Dorsolateral prefrontal cortex (tissue), 120 donors: ENCODE measurements at regions of chr1 and their contacts with region 1.

Region 1: GRCh38 chr1:21077085-21077484 is 99.6 kb downstream of the EIF4G3 start:
- DNase-seq: no peak
- H3K4me3 ChIP-seq: no peak overlapping the region
- H3K27ac ChIP-seq: peak overlapping the region in 22 of 59 donors; percentile 3 to 65 (median 38)
- H3K27me3 ChIP-seq: no peaks in the 10 kb centered on the region
- CTCF ChIP-seq: no peak

Region 2: DNA sequence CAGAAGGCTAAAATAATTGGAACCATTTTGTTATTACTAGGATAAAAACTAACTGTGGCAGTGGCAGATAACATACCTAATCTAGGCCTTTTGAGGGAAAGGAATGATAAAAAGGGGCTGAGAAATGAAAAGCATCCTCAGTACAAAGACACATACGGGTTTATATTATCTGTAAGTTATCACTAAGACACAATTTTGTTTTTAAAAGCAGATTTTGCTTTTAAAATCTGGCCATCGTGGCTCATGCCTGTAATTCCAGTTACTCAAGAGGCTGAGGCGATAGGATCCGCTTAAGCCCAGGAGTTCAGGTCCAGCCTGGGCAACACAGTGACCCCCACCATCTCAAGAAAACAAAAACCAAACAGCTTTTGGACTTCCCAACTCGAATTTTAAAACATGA is 265.2 kb before region 1 on chr1:
- intact Hi-C with region 1: no loop called
- DNase-seq: no peak
- H3K4me3 ChIP-seq: no peak overlapping the region
- H3K27ac ChIP-seq: peak overlapping the region in 1 of 59 donors; percentile 33
- H3K27me3 ChIP-seq: no peaks in the 10 kb centered on the region
- CTCF ChIP-seq: no peak

Region 3: GRCh38 chr1:21189906-21190500 is 112.9 kb after region 1 on chr1:
- intact Hi-C with region 1: loop called (anchors 5 to 10 kb)
- DNase-seq: no peak
- H3K4me3 ChIP-seq: no peak overlapping the region
- H3K27ac ChIP-seq: no peak overlapping the region
- H3K27me3 ChIP-seq: no peaks in the 10 kb centered on the region
- CTCF ChIP-seq: no peak

Region 4: GRCh38 chr1:21200767-21201166 is 123.7 kb after region 1 on chr1:
- intact Hi-C with region 1: loop called (anchors 5 to 10 kb)
- DNase-seq: no peak
- H3K4me3 ChIP-seq: no peak overlapping the region
- H3K27ac ChIP-seq: no peak overlapping the region
- H3K27me3 ChIP-seq: no peaks in the 10 kb centered on the region
- CTCF ChIP-seq: no peak